Mammary epithelial cell (primary cell): ENCODE measurements at regions of chr21 and their contacts with region 1.

Region 1: GRCh38 chr21:39445321-39446269 is at the start of gene LCA5L:
- DNase-seq: peak; percentile 84
- H3K4me3 ChIP-seq: peak within 1 kb of the TSS; percentile 81 to 94 (median 93)
- H3K27ac ChIP-seq: peak within 1 kb of the TSS; percentile 70
- H3K4me1 ChIP-seq: no peaks in the 10 kb centered on the region
- H3K27me3 ChIP-seq: no peaks in the 10 kb centered on the region
- CTCF ChIP-seq: no peak
- total RNA-seq, gene LCA5L: 1.6 to 2.3 TPM

Region 2: GRCh38 chr21:39313571-39314142 is 131.9 kb before region 1 on chr21 and contains the start of gene BRWD1:
- CTCF ChIA-PET with region 1: no interaction called
- dilution Hi-C with region 1: no loop called
- in situ Hi-C with region 1: no loop called
- intact Hi-C with region 1: loop called (anchors 1 kb)
- DNase-seq: peak; percentile 82
- H3K4me3 ChIP-seq: peak within 1 kb of the TSS; percentile 63 to 86 (median 65)
- H3K27ac ChIP-seq: peak within 1 kb of the TSS; percentile 86
- H3K4me1 ChIP-seq: peaks cover 32% of the 10 kb centered on the region
- H3K27me3 ChIP-seq: no peaks in the 10 kb centered on the region
- CTCF ChIP-seq: no peak
- total RNA-seq, gene BRWD1: 29.2 to 60.0 TPM

Region 3: DNA sequence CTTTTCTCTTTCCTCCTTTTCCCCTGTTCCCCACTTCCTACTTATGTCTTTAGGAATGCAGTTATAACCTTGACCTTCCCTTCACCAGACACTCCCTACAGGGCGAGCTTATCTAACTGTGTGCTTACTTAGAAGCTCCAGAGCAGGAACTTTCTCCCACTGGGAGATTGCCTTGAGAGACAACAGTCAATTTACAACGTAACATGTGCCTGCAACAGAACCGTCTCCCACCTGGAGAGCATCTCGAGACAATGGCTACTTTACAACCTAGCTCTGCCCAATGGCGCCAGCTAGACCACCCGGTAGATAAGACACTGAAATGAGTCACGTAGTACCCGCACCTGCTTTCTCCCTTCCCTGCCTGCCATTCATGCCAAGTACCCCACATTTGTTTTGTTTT is 113.4 kb before region 1 on chr21:
- CTCF ChIA-PET with region 1: interaction called, 11 read pairs
- dilution Hi-C with region 1: no loop called
- in situ Hi-C with region 1: no loop called
- intact Hi-C with region 1: no loop called
- DNase-seq: no peak
- H3K4me3 ChIP-seq: no peak overlapping the region
- H3K27ac ChIP-seq: no peak overlapping the region
- H3K4me1 ChIP-seq: no peaks in the 10 kb centered on the region
- H3K27me3 ChIP-seq: no peaks in the 10 kb centered on the region
- CTCF ChIP-seq: no peak

Region 4: GRCh38 chr21:39373644-39374043 is 72.0 kb before region 1 on chr21:
- CTCF ChIA-PET with region 1: no interaction called
- dilution Hi-C with region 1: no loop called
- in situ Hi-C with region 1: no loop called
- intact Hi-C with region 1: loop called (anchors 5 kb)
- DNase-seq: peak; percentile 58
- H3K4me3 ChIP-seq: no peak overlapping the region
- H3K27ac ChIP-seq: no peak overlapping the region
- H3K4me1 ChIP-seq: no peaks in the 10 kb centered on the region
- H3K27me3 ChIP-seq: no peaks in the 10 kb centered on the region
- CTCF ChIP-seq: peak; percentile 25 to 40